Activated CD8-positive, alpha-beta T cell treated with anti-CD3 and anti-CD28 coated beads for 36 hours (primary cell): ENCODE measurements at regions of chr3 and their contacts with region 1.

Region 1: GRCh38 chr3:30628901-30629590 is 22.6 kb downstream of the TGFBR2 start:
- DNase-seq: no peak
- ATAC-seq: peak; percentile 12
- H3K4me3 Mint-ChIP-seq: peak overlapping the region; percentile 34
- H3K27ac Mint-ChIP-seq: peak overlapping the region; percentile 98
- H3K4me1 Mint-ChIP-seq: peaks cover 89% of the 10 kb centered on the region
- H3K27me3 Mint-ChIP-seq: no peaks in the 10 kb centered on the region
- CTCF ChIP-seq: no peak

Region 2: DNA sequence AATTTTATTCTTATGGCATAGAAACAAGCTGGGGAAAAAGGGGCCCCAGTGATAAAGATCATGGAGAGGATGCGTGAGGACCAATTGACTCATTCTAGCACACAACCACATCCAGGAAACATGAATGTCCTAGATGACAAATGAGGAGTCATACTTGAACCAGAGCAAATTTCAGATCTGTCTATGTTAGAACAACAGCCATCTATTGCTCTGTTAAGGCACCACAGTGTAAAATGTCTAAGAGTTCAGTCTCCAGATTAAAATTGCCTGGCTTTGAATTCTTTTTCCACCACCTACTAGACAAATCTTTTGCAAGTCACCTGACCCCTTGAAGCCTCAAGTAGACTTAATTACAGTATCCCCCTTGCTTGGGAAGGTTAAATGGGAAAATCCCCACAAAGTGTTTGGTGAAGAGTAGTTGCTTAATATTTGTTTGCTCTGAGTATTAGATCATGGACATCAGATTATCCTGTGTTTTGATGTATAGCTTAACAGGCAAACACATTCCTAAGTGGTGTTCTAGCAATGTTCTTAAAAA is 281.3 kb before region 1 on chr3:
- CTCF ChIA-PET with region 1: no interaction called
- POLR2A ChIA-PET with region 1: no interaction called
- intact Hi-C with region 1: loop called (anchors 5 kb)
- DNase-seq: peak; percentile 77
- ATAC-seq: peak; percentile 96
- H3K4me3 Mint-ChIP-seq: peak overlapping the region; percentile 20
- H3K27ac Mint-ChIP-seq: peak overlapping the region; percentile 91
- H3K4me1 Mint-ChIP-seq: peaks cover 84% of the 10 kb centered on the region
- H3K27me3 Mint-ChIP-seq: peaks cover 1% of the 10 kb centered on the region
- CTCF ChIP-seq: no peak

Region 3: DNA sequence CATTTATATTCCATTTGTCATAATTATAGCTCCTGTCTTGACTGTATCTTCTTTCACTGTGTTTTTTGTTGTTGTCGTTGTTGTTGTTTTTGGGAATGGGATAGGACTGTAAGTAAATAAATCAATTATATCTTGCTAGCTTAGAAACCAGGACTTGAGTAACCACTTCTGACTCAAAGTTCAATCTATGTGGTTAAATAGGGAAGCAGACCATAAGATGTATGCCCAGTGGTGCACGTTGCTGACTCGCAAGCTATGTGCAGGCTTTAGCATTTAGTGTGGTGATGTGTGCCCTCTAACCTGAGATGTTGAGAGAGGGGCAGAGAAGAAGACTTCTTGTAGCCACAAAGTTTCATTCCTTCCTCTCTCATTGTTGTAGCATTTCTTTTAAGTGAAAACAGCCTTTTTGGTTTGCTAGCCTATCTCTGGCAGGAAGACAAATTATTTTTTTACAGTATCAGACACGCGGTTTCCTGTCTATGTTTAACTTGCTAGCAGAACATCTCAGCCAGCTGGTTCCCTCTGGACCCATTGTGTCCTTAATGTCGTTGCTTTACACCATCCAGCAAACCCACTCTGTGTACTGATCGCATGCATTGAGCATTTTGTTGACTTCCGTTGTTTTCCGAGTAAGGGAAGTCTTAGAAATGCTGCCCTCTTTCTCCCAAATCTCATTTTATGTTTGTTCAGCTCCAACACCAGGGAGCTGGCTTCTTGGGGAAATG is 29.4 kb after region 1 on chr3:
- CTCF ChIA-PET with region 1: interaction called, 8 read pairs
- POLR2A ChIA-PET with region 1: interaction called, 34 read pairs
- intact Hi-C with region 1: no loop called
- DNase-seq: peak; percentile 80
- ATAC-seq: peak; percentile 74
- H3K4me3 Mint-ChIP-seq: peak overlapping the region; percentile 65
- H3K27ac Mint-ChIP-seq: peak overlapping the region; percentile 98
- H3K4me1 Mint-ChIP-seq: peaks cover 100% of the 10 kb centered on the region
- H3K27me3 Mint-ChIP-seq: no peaks in the 10 kb centered on the region
- CTCF ChIP-seq: no peak